Activated CD4-positive, alpha-beta memory T cell treated with anti-CD3 and anti-CD28 coated beads, Interleukin-2, amount 10 ng/mL, durations not matched to agents 7 days and 5 days (primary cell): ENCODE measurements at regions of chr12 and their contacts with region 1.

Region 1: GRCh38 chr12:14769969-14770495 is 33.2 kb downstream of the WBP11 start:
- DNase-seq: peak; percentile 86
- H3K4me3 Mint-ChIP-seq: peak overlapping the region; percentile 90
- H3K27ac Mint-ChIP-seq: peak overlapping the region; percentile 98
- H3K4me1 Mint-ChIP-seq: peaks cover 47% of the 10 kb centered on the region
- H3K27me3 Mint-ChIP-seq: no peaks in the 10 kb centered on the region

Region 2: DNA sequence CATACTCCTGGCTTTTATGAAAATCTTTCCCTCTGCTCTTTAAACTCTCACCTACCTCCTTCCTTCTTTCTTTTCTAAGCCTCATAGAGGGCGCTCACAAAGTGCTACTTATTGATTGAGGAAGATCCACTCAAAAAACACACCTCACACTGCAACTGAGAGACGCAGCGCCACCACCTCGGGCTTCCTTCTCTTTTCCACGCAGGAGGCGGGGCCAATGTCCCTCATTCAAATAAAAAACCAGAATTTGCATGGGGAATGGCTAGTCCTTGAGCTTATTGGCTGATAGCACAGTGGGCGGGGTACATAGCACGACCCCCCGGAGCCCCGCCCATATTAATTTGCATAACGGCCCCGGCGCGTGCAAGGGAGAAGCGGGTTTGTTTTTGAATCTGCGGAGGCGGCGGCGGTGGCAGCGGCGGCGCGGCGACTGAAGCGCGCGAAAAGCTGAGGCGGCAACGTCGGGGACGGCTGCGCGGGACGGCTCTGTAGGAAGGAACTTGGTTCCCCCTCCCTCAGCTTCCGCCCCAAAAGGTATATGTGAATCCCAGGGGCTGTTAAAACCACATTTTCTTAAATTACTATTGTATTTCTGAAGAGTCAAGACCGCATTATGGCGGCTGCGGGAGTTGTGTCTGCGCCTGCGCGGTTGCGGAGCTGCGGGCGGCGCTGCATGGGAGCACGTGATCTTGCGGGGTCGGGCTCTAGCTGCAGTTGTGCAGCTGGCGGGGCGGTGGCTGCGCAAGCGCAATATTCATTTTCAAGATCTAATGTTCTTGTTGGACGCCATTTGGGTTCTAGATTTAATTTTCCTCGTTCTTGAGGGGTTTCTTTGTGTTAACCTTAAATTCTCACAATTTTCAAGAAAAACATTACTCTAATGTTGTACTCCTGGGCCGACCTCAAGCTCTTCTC is 404.5 kb before region 1 on chr12 and contains the start of gene ATF7IP:
- CTCF ChIA-PET with region 1: interaction called, 9 read pairs
- POLR2A ChIA-PET with region 1: interaction called, 47 read pairs
- DNase-seq: peak; percentile 96
- H3K4me3 Mint-ChIP-seq: peak within 1 kb of the TSS; percentile 79
- H3K27ac Mint-ChIP-seq: peak within 1 kb of the TSS; percentile 94
- H3K4me1 Mint-ChIP-seq: peaks cover 31% of the 10 kb centered on the region
- H3K27me3 Mint-ChIP-seq: no peaks in the 10 kb centered on the region
- total RNA-seq, gene ATF7IP: 129 to 134 TPM

Region 3: GRCh38 chr12:14782756-14783155 is 12.7 kb after region 1 on chr12:
- CTCF ChIA-PET with region 1: interaction called, 5 read pairs
- POLR2A ChIA-PET with region 1: interaction called, 37 read pairs
- DNase-seq: no peak
- H3K4me3 Mint-ChIP-seq: no peak overlapping the region
- H3K27ac Mint-ChIP-seq: no peak overlapping the region
- H3K4me1 Mint-ChIP-seq: peaks cover 10% of the 10 kb centered on the region
- H3K27me3 Mint-ChIP-seq: peaks cover 3% of the 10 kb centered on the region

Region 4: GRCh38 chr12:14810953-14811483 is 41.0 kb after region 1 on chr12:
- CTCF ChIA-PET with region 1: interaction called, 50 read pairs
- POLR2A ChIA-PET with region 1: interaction called, 177 read pairs
- DNase-seq: no peak
- H3K4me3 Mint-ChIP-seq: no peak overlapping the region
- H3K27ac Mint-ChIP-seq: no peak overlapping the region
- H3K4me1 Mint-ChIP-seq: peaks cover 12% of the 10 kb centered on the region
- H3K27me3 Mint-ChIP-seq: no peaks in the 10 kb centered on the region

Region 5: GRCh38 chr12:14913381-14913781 is 143.3 kb after region 1 on chr12:
- CTCF ChIA-PET with region 1: no interaction called
- POLR2A ChIA-PET with region 1: no interaction called
- DNase-seq: no peak
- H3K4me3 Mint-ChIP-seq: no peak overlapping the region
- H3K27ac Mint-ChIP-seq: no peak overlapping the region
- H3K4me1 Mint-ChIP-seq: peaks cover 15% of the 10 kb centered on the region
- H3K27me3 Mint-ChIP-seq: no peaks in the 10 kb centered on the region

Region 6: GRCh38 chr12:14960548-14961465 is 190.8 kb after region 1 on chr12:
- CTCF ChIA-PET with region 1: interaction called, 13 read pairs
- POLR2A ChIA-PET with region 1: interaction called, 123 read pairs
- DNase-seq: peak; percentile 58
- H3K4me3 Mint-ChIP-seq: peak overlapping the region; percentile 96
- H3K27ac Mint-ChIP-seq: peak overlapping the region; percentile 96
- H3K4me1 Mint-ChIP-seq: peaks cover 50% of the 10 kb centered on the region
- H3K27me3 Mint-ChIP-seq: no peaks in the 10 kb centered on the region

Region 7: DNA sequence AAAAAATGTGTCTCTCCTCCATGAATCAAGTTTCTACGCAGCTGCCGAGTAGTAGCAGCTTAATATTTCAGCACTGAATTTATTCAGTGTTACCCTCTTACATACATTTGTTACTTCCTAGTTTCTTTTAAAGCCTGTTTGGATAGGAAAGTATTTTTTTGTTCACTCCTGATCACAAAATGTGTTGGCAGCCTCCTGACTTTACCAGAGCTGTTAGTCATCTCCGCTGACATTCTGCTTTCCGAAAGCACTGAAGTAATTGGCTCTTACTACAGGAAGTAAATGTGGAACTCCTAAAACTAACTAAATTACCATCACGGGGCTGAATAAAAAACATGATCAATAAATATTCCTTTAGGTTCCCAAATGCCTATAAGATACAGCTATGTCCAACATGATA is 793.6 kb after region 1 on chr12:
- CTCF ChIA-PET with region 1: no interaction called
- POLR2A ChIA-PET with region 1: interaction called, 14 read pairs
- DNase-seq: peak; percentile 32
- H3K4me3 Mint-ChIP-seq: peak overlapping the region; percentile 64
- H3K27ac Mint-ChIP-seq: peak overlapping the region; percentile 94
- H3K4me1 Mint-ChIP-seq: peaks cover 62% of the 10 kb centered on the region
- H3K27me3 Mint-ChIP-seq: no peaks in the 10 kb centered on the region